ENCODE measurements at regions of chr10 and their contacts with region 1.

Region 1: GRCh38 chr10:129593953-129594352 is 126.9 kb downstream of the MGMT start:
- DNase-seq: no peak

Region 2: DNA sequence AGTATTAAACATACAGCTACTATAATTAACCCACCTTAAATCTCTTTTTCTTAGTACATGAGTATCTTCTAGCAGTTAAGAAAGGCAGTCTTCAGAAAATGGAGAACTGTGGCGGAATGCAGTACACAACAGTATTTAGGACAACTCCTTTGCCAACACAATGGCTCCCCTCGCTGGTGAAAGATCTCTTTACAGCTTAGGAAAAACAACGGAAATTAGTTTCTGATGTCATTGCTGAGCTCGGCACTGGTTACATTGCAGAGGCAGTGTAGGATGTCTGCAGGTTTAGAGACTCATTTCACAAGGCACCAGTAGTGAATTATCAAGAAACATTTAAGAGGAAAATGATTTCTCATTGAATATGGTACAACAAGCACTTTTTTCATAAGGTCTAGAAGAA is 585.7 kb after region 1 on chr10:
- intact Hi-C with region 1: loop called in 1 of 2 experiments (anchors 10 kb)
- DNase-seq: no peak